ENCODE measurements at regions of chr4 and their contacts with region 1.

Region 1: GRCh38 chr4:2977211-2978088 is 14.1 kb downstream of the GRK4 start:
- DNase-seq: peak; percentile 57
- H3K4me3 Mint-ChIP-seq: no peak overlapping the region
- H3K27ac Mint-ChIP-seq: peak overlapping the region; percentile 84
- H3K4me1 Mint-ChIP-seq: peaks cover 6% of the 10 kb centered on the region
- H3K27me3 Mint-ChIP-seq: peaks cover 3% of the 10 kb centered on the region
- CTCF ChIP-seq: no peak

Region 2: DNA sequence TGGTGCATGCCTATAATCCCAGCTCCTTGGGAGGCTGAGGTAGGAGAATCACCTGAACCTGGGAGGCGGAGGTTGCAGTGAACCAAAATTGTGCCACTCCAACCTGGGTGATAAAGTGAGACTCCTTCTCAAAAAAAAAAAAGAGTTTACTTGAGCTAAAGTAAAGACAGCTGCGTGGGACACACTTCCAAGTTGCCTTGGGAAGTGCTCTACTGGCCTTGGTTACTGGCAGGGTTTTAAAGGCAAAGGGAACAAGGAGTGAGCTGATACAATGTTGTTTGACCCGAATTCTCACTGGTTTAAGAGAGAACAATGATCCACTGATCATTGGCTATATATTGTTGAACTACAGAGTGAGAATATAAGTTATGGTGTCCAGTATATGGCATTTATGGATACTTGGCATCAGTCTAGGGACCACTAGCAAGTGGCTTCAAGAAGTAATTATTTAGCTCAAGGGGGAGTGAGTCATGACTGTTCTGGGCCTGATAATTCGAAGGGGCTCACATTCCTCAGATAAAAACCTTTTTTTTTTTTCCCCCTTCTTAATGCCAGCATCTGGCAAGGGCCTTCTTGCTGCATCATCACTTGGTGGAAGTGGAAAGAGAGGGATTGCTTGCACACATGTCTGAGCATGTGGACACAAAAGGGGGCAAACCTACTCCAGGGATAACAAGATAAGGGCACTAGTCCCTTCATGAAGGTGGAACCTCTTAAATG is 18.3 kb after region 1 on chr4:
- CTCF ChIA-PET with region 1: interaction called, 24 read pairs
- POLR2A ChIA-PET with region 1: interaction called, 3 read pairs
- intact Hi-C with region 1: no loop called
- DNase-seq: no peak
- H3K4me3 Mint-ChIP-seq: no peak overlapping the region
- H3K27ac Mint-ChIP-seq: no peak overlapping the region
- H3K4me1 Mint-ChIP-seq: no peaks in the 10 kb centered on the region
- H3K27me3 Mint-ChIP-seq: no peaks in the 10 kb centered on the region
- CTCF ChIP-seq: no peak

Region 3: DNA sequence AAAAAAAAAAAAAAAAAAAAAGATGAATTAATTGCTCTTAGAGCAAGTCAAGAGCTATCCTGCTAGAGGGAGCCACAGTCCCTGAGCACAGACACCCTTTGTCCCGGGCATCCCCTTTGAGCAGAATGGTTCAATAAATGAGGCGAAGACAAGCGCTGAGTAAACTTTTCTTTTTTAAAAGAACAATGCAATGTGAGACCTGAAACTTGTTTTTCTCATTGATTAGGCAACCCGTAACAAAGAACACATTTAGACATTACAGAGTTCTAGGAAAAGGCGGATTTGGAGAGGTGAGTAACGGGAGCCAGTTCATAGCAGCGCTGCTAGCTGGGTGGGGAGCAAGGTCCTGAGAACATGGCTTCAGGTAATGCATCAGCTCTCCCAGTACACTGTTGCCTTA is 32.0 kb after region 1 on chr4:
- CTCF ChIA-PET with region 1: interaction called, 7 read pairs
- POLR2A ChIA-PET with region 1: interaction called, 21 read pairs
- intact Hi-C with region 1: no loop called
- DNase-seq: peak; percentile 78
- H3K4me3 Mint-ChIP-seq: peak overlapping the region; percentile 13
- H3K27ac Mint-ChIP-seq: peak overlapping the region; percentile 96
- H3K4me1 Mint-ChIP-seq: peaks cover 20% of the 10 kb centered on the region
- H3K27me3 Mint-ChIP-seq: no peaks in the 10 kb centered on the region
- CTCF ChIP-seq: peak; percentile 19

Region 4: DNA sequence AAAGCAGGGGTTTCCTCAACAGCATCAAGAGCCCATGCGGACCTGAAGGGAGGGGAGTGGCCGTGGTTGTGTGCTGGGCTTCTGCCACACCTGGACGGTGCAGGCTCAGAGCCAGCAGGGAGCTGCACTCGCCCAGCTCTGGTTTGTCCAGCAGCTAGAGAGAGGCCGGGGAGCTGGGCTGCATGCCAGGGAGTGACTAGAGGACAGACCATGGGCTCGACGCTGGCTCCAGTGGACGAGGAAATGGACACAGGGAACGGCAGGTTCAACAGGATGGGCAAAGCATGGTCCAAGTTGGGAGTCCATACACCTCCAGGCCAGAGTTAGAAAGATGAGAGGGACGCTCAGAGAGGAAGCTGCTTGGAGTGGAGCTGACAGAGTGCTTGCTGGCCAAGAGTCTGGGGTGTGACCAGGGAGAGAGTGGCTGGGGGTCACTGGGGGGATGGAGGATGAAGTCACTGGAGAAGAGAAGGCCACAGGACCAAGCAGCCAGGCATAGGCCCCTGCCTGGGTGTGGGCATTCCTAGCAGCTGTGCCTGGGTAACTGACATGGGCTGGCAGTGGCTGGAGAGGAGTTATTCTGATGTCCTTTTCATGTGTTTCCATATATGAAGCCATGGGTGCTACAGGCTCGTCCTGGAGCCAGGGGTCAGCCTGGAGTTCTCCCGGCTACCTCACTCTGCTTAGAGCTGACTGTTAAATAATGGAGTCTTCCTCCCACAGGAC is 54.1 kb after region 1 on chr4:
- CTCF ChIA-PET with region 1: interaction called, 80 read pairs
- POLR2A ChIA-PET with region 1: no interaction called
- intact Hi-C with region 1: no loop called
- DNase-seq: peak; percentile 66
- H3K4me3 Mint-ChIP-seq: no peak overlapping the region
- H3K27ac Mint-ChIP-seq: no peak overlapping the region
- H3K4me1 Mint-ChIP-seq: peaks cover 13% of the 10 kb centered on the region
- H3K27me3 Mint-ChIP-seq: no peaks in the 10 kb centered on the region
- CTCF ChIP-seq: no peak

Region 5: GRCh38 chr4:3037957-3038461 is 60.6 kb after region 1 on chr4:
- CTCF ChIA-PET with region 1: interaction called, 80 read pairs
- POLR2A ChIA-PET with region 1: interaction called, 7 read pairs
- intact Hi-C with region 1: loop called (anchors 1 kb)
- DNase-seq: no peak
- H3K4me3 Mint-ChIP-seq: no peak overlapping the region
- H3K27ac Mint-ChIP-seq: no peak overlapping the region
- H3K4me1 Mint-ChIP-seq: peaks cover 10% of the 10 kb centered on the region
- H3K27me3 Mint-ChIP-seq: no peaks in the 10 kb centered on the region
- CTCF ChIP-seq: no peak

Measured in MCF 10A (cell line).